Activated naive CD4-positive, alpha-beta T cell treated with anti-CD3 and anti-CD28 coated beads for 36 hours (primary cell): ENCODE measurements at regions of chr12 and their contacts with region 1.

Region 1: DNA sequence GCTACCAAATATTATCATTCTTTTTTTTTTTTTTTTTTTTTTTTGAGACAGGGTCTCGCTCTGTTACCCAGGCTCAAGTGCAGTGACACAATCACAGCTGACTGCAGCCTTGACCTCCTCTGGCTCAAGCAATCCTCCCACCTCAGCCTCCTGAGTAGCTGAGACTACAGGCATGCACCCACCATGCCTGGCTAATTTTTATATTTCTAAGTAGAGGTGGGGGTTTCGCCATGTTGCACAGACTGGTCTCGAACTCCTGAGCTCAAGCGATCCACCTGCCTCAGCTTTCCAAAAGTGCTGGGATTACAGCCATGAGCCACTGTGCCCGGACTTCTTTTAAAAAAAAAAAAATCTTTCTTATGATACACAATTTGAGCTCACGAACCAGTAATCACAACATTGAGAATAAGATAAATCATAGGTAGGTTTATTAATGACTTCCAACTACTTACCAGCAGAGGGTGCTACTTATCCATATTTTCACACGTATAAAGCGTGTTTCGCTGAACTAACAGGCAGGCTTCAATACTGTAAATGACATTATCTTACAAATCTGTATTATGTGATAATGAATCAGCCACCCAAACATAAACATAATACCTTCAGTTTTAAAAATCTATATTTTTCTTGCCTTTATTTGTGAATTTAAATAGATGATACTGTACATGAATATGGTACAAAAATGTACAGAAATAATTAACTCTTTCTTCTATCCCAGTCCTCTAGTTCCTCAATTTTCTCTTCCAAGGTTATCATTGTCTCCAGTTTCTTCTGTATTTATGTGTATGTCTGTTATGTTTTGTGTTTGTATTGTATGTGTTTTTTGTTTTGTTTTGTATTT is 42.5 kb upstream of the BCAT1 start:
- DNase-seq: no peak
- H3K4me3 Mint-ChIP-seq: no peak overlapping the region
- H3K27ac Mint-ChIP-seq: no peak overlapping the region
- H3K4me1 Mint-ChIP-seq: peaks cover 9% of the 10 kb centered on the region
- H3K27me3 Mint-ChIP-seq: peaks cover 2% of the 10 kb centered on the region

Region 2: GRCh38 chr12:24960222-24960855 is 31.1 kb before region 1 on chr12:
- CTCF ChIA-PET with region 1: interaction called, 7 read pairs
- intact Hi-C with region 1: loop called (anchors 2 kb)
- DNase-seq: peak; percentile 76
- H3K4me3 Mint-ChIP-seq: no peak overlapping the region
- H3K27ac Mint-ChIP-seq: no peak overlapping the region
- H3K4me1 Mint-ChIP-seq: peaks cover 23% of the 10 kb centered on the region
- H3K27me3 Mint-ChIP-seq: peaks cover 17% of the 10 kb centered on the region

Region 3: GRCh38 chr12:25130741-25131188 is 139.3 kb after region 1 on chr12:
- CTCF ChIA-PET with region 1: interaction called, 84 read pairs
- intact Hi-C with region 1: loop called (anchors 1 kb)
- DNase-seq: no peak
- H3K4me3 Mint-ChIP-seq: no peak overlapping the region
- H3K27ac Mint-ChIP-seq: no peak overlapping the region
- H3K4me1 Mint-ChIP-seq: no peaks in the 10 kb centered on the region
- H3K27me3 Mint-ChIP-seq: peaks cover under 1% of the 10 kb centered on the region

Region 4: DNA sequence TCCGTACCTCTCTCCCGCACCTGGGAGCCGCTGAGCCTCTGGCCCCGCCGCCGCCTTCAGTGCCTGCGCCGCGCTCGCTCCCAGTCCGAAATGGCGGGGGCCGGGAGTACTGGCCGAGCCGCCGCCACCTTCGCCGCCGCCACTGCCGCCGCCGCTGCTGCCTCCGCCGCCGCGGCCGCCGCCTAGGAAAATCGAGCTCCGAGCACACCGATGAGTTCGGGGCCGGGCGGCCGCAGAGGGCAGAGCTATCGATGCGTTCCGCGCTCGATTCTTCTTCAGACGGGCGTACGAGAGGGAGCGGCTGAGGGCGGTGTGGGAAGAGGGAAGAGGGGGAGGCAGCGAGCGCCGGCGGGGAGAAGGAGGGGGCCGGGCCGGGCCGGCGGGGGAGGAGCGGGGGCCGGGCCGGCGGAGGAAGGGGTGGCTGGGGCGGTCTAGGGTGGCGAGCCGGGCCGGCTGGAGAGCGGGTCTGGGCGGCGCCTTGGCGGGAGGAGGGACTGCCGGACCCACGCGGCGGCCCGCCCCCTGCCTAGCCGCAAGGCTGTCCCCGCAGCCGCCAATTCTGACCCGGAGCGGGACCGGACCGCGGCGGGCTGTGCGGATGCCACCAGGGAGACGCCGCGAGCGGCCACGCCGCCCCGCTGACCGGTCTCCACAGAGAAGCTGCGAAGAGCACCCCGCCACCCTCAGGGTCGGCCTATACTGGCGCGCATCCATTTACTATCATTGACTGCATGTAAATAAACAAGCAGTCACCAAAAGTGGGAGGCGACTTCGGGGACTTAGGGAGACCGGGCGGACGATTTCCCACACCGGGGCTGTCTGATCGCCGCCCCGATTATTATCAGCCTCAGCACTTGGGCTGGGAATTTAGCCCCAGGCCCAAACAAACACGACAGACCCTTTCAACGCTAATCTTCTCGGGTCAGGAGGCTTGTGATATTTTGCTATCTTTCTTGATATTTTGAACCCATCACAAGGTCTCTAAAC is 259.6 kb after region 1 on chr12 and contains the start of gene KRAS:
- CTCF ChIA-PET with region 1: no interaction called
- intact Hi-C with region 1: no loop called
- DNase-seq: peak; percentile 94
- H3K4me3 Mint-ChIP-seq: peak within 1 kb of the TSS; percentile 93
- H3K27ac Mint-ChIP-seq: peak within 1 kb of the TSS; percentile 88
- H3K4me1 Mint-ChIP-seq: peaks cover 43% of the 10 kb centered on the region
- H3K27me3 Mint-ChIP-seq: no peaks in the 10 kb centered on the region
- total RNA-seq, gene KRAS: 18.9 to 20.6 TPM

Region 5: DNA sequence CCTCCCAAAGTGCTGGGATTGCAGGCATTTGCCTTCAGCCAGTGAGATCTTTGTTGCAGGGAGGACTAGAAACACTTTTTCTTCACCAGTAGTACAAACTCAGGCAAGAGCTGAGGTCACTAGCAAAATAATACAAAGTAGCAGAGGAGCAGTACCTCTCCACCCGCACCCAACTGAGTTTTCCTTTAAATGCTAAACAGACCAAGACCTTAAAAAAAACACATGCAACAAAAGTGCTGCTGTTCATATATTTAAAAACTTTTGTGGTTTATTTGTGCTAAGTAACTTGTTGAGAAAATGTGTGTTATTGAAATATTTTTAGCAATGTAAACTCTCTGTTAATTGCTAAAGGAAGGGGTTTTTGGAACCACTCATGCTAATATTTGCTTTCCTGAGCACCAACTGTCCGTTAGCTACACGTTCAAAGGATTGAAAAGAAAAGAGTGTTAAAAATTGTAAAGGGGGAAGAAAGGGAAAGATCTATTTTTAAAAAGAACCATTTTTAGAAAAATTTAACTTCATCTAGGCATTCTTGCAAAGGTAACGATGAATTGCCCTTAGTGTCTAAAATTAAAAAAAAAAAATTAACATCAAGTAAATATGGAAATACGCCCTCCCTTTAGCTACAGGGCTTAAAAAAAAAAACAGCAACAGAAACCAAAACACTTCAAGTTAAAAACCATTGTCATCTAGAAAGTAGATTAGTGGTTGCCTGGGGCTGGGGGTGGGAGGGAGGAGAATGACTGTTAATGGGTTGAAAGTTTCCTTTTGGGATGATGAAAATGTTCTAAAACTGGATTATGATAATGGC is 373.3 kb after region 1 on chr12:
- CTCF ChIA-PET with region 1: no interaction called
- intact Hi-C with region 1: no loop called
- DNase-seq: peak; percentile 82
- H3K4me3 Mint-ChIP-seq: peak overlapping the region; percentile 39
- H3K27ac Mint-ChIP-seq: peak overlapping the region; percentile 56
- H3K4me1 Mint-ChIP-seq: peaks cover 15% of the 10 kb centered on the region
- H3K27me3 Mint-ChIP-seq: peaks cover 5% of the 10 kb centered on the region

Region 6: DNA sequence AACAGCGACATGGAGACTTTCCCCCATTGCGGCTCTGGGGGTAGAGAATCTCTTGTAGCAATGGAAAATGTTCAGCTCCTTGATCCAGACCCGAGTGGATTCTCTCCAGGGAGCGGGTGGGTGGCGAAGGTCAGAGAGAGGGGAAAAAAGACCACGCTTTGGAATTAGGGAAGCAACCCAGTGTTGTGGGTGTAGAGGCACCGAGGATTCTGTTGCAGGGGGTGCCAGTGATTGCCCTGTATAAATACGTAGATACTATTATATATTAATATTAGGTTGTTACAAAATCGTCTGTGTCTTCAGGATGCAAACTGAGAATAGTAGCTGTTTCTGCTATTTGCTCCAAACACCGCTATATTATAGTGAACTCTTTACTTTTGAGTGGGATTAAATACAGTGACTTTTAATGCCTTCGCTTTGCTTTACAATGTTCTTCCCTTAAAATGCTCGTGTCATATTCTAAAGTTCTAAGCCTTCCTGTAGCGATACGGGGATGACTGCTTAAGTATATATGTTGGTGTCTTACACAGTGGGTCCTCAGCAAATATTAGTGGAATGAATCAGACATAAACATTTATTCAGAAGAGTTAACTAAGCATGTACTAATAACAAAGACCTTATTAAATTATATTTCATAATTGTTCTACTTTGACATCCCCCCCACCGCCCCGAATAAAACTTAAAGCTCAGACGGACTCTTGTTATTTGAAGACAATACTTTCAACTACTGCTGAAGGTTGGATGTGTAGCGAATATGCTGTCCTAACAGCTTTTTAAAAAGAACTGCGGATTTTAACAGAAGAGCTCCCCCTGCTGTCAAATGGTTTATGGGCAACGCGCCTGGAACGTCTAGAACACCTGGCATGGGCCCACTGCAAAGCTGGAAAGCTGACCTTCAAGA is 395.7 kb after region 1 on chr12:
- CTCF ChIA-PET with region 1: interaction called, 9 read pairs
- intact Hi-C with region 1: loop called (anchors 1 kb)
- DNase-seq: peak; percentile 87
- H3K4me3 Mint-ChIP-seq: peak overlapping the region; percentile 99
- H3K27ac Mint-ChIP-seq: peak overlapping the region; percentile 100
- H3K4me1 Mint-ChIP-seq: peaks cover 56% of the 10 kb centered on the region
- H3K27me3 Mint-ChIP-seq: no peaks in the 10 kb centered on the region